ENCODE measurements at regions of chr14 and their contacts with region 1.

Region 1: DNA sequence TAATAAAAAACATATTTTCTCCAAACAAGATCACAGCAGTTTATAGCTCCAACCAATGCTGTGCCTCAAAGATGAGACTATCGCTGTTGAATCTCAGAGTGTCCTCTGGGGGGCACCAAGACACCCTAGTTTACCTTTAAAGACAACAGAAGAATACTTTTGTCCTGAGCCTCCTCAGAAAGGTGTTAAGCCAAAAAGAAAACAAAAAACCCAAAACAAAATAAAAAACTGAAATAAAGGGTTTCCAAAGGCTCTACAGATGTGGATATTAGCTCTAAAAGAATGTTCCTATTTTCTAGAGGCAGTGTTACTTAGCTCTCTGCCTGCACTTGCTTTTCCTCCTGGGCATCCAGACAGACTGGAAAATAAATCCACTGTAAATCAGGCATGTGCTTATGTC is 86.9 kb upstream of the TTC7B start:
- DNase-seq: peak; percentile 15
- H3K4me3 ChIP-seq: no peak overlapping the region
- H3K27ac ChIP-seq: no peak overlapping the region
- H3K27me3 ChIP-seq: no peaks in the 10 kb centered on the region
- CTCF ChIP-seq: peak; percentile 72

Region 2: GRCh38 chr14:90301668-90302090 is 601.4 kb before region 1 on chr14:
- CTCF ChIA-PET with region 1: interaction called, 21 read pairs
- POLR2A ChIA-PET with region 1: no interaction called
- DNase-seq: peak; percentile 41
- H3K4me3 ChIP-seq: no peak overlapping the region
- H3K27ac ChIP-seq: no peak overlapping the region
- H3K27me3 ChIP-seq: no peaks in the 10 kb centered on the region
- CTCF ChIP-seq: peak; percentile 55

Region 3: GRCh38 chr14:90924621-90925345 is 21.7 kb after region 1 on chr14:
- CTCF ChIA-PET with region 1: interaction called, 13 read pairs
- POLR2A ChIA-PET with region 1: no interaction called
- DNase-seq: no peak
- H3K4me3 ChIP-seq: no peak overlapping the region
- H3K27ac ChIP-seq: no peak overlapping the region
- H3K27me3 ChIP-seq: no peaks in the 10 kb centered on the region
- CTCF ChIP-seq: no peak

Region 4: DNA sequence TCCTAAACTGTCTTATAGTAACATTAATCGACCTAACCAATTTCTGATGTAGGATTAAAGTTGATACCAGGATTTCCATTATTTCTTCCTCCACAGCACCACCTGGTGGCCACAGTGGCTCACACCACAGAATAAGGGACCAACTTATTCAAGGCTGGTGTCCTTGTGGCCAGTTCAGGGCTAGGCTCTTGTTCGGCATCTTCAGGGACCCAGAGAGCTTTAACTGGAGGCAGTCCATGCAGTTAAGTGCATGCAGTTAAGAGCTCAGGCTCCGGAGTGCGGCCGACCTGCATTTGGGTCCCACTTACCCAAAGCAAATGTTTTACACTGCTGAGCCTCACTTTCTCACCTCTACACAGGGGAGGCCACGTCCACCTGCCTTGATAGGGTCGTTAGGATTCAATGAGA is 383.4 kb after region 1 on chr14:
- CTCF ChIA-PET with region 1: interaction called, 33 read pairs
- POLR2A ChIA-PET with region 1: no interaction called
- DNase-seq: peak; percentile 37
- H3K4me3 ChIP-seq: no peak overlapping the region
- H3K27ac ChIP-seq: no peak overlapping the region
- H3K27me3 ChIP-seq: no peaks in the 10 kb centered on the region
- CTCF ChIP-seq: peak; percentile 87

Region 5: GRCh38 chr14:91292491-91292890 is 389.4 kb after region 1 on chr14:
- CTCF ChIA-PET with region 1: interaction called, 33 read pairs
- POLR2A ChIA-PET with region 1: no interaction called
- DNase-seq: no peak
- H3K4me3 ChIP-seq: no peak overlapping the region
- H3K27ac ChIP-seq: no peak overlapping the region
- H3K27me3 ChIP-seq: no peaks in the 10 kb centered on the region
- CTCF ChIP-seq: no peak

Measured in AG04450 (cell line).